Heart right ventricle (tissue), 16 donors: ENCODE measurements at regions of chr12 and their contacts with region 1.

Region 1: DNA sequence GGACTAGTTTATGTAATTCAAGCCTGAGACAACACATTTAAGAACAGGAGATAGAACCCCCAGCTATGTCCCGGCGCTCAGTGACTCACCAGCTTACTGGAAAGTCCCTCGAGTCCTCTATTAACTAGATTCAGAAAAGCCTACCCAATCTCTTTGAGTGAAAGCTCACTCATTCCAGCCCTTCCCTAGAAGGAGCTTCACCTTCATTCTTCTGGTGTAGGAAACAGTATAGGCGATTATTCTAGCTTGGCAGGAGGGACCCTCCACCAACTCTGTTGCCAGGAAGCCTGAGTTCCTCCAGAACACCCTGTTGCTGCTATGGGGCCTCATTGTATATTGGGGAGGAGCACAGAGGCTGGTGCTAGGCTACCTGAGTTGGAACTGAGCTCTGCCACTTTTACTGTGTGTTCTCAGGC is 57.2 kb upstream of the AEBP2 start:
- DNase-seq: no peak
- ATAC-seq: peak in 3 of 8 donors; percentile 26 to 51 (median 38)
- H3K4me3 ChIP-seq: no peak overlapping the region
- H3K27ac ChIP-seq: no peak overlapping the region
- H3K4me1 ChIP-seq: peaks cover 0 to 11% (median 0%) of the 10 kb centered on the region in 9 donors
- H3K27me3 ChIP-seq: no peaks in the 10 kb centered on the region
- CTCF ChIP-seq: no peak

Region 2: GRCh38 chr12:19498099-19498498 is 116.0 kb after region 1 on chr12:
- intact Hi-C with region 1: loop called in 1 of 10 experiments (anchors 5 kb)
- DNase-seq: no peak
- ATAC-seq: no peak
- H3K4me3 ChIP-seq: no peak overlapping the region
- H3K27ac ChIP-seq: no peak overlapping the region
- H3K4me1 ChIP-seq: peaks cover 0 to 11% (median 0%) of the 10 kb centered on the region in 9 donors
- H3K27me3 ChIP-seq: no peaks in the 10 kb centered on the region
- CTCF ChIP-seq: no peak